Activated T-helper 1 cell treated with anti-CD3 and anti-CD28 coated beads, Interleukin-12 subunit alpha, Interleukin-12 subunit beta, Interleukin-2, Interleukin-4 antibody, amounts not matched to agents 30 ng/mL and 10 ng/mL and 1 ng/mL, durations not matched to agents 14 hours and 24 hours and 36 hours (primary cell): ENCODE measurements at regions of chr10 and their contacts with region 1.

Region 1: DNA sequence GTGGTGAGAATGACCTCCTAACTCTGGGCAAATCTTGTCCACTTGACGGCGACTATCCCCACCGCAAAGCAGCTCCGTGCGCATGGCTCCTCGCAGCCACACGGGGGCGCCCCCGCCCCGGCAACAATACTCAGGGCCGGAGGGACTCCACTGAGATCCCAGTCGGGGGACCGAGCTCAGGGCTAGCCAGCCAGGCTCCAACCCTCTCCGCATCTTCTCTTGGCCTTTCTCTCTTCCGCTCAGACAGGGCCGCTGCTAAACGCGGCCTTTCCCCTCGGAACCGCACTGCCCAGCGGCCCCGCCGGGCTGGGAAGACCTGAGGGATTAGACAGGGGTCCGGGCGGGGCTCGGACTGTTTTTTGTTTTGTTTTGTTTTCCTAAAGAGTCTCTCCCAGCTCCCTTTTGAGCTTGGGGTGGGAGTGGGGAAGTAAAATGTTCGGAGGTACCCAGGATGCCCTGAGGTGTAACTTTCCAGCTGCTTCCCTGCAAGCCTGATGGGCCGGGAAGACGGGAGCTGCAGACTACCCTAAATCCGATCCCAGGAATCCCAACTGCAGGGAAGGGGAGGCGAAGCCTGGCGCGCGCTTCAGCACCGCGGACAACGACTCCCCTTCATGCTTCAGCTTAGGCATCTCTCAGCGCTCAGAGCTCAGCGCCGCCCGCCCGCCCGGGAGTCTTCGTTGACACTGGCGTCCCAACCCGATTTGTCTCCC is 2.7 kb downstream of the KCNIP2 start:
- DNase-seq: peak; percentile 71
- H3K4me3 Mint-ChIP-seq: peak overlapping the region; percentile 85
- H3K27ac Mint-ChIP-seq: peak overlapping the region; percentile 77
- H3K4me1 Mint-ChIP-seq: peaks cover 55% of the 10 kb centered on the region
- H3K27me3 Mint-ChIP-seq: peaks cover 18% of the 10 kb centered on the region

Region 2: GRCh38 chr10:101858723-101859500 is 18.0 kb after region 1 on chr10:
- intact Hi-C with region 1: loop called (anchors 2 kb)
- DNase-seq: no peak
- H3K4me3 Mint-ChIP-seq: no peak overlapping the region
- H3K27ac Mint-ChIP-seq: peak overlapping the region; percentile 5
- H3K4me1 Mint-ChIP-seq: peaks cover 24% of the 10 kb centered on the region
- H3K27me3 Mint-ChIP-seq: no peaks in the 10 kb centered on the region

Region 3: DNA sequence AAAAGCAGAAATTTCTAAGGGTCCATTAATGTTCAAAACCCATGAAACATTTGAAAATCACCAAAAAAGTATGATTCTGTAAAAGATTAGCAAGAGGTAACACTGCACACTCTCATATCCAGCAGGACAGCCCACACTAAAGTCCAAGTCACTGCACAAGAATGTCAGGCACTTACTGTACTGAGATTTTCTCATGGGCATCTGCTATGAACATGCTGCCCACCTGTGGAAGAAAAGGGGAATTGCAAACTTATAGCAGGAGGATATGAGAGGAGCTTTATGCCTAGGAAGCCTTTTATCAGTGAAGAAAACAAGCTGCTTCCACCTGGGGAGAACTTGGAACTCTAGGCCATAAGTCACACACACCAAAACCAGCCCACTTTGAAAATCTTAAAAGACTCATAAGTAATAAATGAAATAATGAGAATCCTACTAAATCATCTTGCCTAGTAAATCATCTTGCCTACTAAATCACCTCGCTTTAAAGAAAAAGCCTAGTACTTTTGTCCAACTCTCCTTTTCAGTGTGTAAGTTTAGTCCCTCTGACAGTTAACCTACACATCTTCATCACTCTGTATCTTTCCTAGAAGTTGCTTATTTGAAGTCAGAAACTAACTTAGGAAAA is 169.0 kb after region 1 on chr10:
- intact Hi-C with region 1: loop called (anchors 1 kb)
- DNase-seq: peak; percentile 41
- H3K4me3 Mint-ChIP-seq: no peak overlapping the region
- H3K27ac Mint-ChIP-seq: no peak overlapping the region
- H3K4me1 Mint-ChIP-seq: no peaks in the 10 kb centered on the region
- H3K27me3 Mint-ChIP-seq: no peaks in the 10 kb centered on the region

Region 4: DNA sequence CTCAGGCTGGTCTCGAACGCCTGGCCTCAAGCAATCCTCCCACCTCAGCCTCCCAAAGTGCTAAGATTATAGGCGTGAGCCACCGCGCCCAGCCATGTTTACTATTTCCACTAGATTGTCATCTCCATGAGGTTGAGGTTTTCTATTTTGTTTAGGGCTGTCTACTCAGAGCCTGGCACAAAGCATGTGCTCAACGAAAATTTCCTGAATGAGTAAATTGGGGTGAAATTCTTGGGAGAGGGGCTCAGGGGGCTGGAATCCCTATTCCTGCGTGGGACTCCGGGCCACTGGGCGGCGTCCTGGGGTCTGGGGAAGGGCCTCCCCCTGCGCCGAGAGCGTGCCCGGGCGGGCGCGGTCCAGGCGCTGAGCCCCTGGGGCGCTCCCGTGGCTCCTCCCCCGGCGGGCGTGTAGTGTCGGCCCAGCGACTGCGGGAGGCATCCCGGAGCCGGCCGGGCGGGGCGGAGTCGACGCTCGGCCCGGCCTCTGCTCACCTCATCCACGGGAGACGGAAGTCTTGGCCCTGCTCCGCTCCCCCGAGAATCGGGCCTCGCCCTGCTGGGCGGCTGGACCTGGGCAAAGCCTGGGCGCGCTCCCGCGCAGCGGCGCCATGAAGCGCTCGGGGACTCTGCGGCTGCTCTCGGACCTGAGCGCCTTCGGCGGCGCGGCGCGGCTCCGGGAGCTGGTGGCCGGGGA is 224.1 kb after region 1 on chr10 and contains the start of gene HPS6:
- intact Hi-C with region 1: loop called (anchors 2 kb)
- DNase-seq: peak; percentile 89
- H3K4me3 Mint-ChIP-seq: peak within 1 kb of the TSS; percentile 89
- H3K27ac Mint-ChIP-seq: peak within 1 kb of the TSS; percentile 90
- H3K4me1 Mint-ChIP-seq: peaks cover 17% of the 10 kb centered on the region
- H3K27me3 Mint-ChIP-seq: no peaks in the 10 kb centered on the region
- total RNA-seq, gene HPS6: 24.5 and 26.8 TPM in 2 replicates